PC-3 (cell line): ENCODE measurements at regions of chr2 and their contacts with region 1.

Region 1: GRCh38 chr2:220504938-220505503 is 877.6 kb downstream of the SLC4A3 start:
- DNase-seq: peak; percentile 86
- ATAC-seq: peak; percentile 85
- H3K4me3 ChIP-seq: no peak overlapping the region
- H3K27ac ChIP-seq: peak overlapping the region; percentile 68
- H3K4me1 ChIP-seq: peaks cover 50% of the 10 kb centered on the region
- H3K27me3 ChIP-seq: no peaks in the 10 kb centered on the region
- CTCF ChIP-seq: no peak

Region 2: GRCh38 chr2:220198920-220199319 is 306.1 kb before region 1 on chr2:
- CTCF ChIA-PET with region 1: no interaction called
- POLR2A ChIA-PET with region 1: no interaction called
- intact Hi-C with region 1: loop called (anchors 10 kb)
- DNase-seq: peak; percentile 83
- ATAC-seq: peak; percentile 82
- H3K4me3 ChIP-seq: no peak overlapping the region
- H3K27ac ChIP-seq: peak overlapping the region; percentile 33
- H3K4me1 ChIP-seq: peaks cover 28% of the 10 kb centered on the region
- H3K27me3 ChIP-seq: no peaks in the 10 kb centered on the region
- CTCF ChIP-seq: no peak